HepG2 (cell line): ENCODE measurements at regions of chr17 and their contacts with region 1.

Region 1: GRCh38 chr17:31524926-31525800 is 133.7 kb downstream of the RAB11FIP4 start:
- DNase-seq: peak; percentile 61
- ATAC-seq: peak; percentile 85
- H3K4me3 ChIP-seq: no peak overlapping the region
- H3K27ac ChIP-seq: no peak overlapping the region
- H3K4me1 ChIP-seq: peaks cover 13% of the 10 kb centered on the region
- H3K27me3 ChIP-seq: no peaks in the 10 kb centered on the region
- CTCF ChIP-seq: peak; percentile 93
- EP300 ChIP-seq: no peak
- POLR2A ChIP-seq: no peak
- RAD21 ChIP-seq: peak; percentile 97

Region 2: DNA sequence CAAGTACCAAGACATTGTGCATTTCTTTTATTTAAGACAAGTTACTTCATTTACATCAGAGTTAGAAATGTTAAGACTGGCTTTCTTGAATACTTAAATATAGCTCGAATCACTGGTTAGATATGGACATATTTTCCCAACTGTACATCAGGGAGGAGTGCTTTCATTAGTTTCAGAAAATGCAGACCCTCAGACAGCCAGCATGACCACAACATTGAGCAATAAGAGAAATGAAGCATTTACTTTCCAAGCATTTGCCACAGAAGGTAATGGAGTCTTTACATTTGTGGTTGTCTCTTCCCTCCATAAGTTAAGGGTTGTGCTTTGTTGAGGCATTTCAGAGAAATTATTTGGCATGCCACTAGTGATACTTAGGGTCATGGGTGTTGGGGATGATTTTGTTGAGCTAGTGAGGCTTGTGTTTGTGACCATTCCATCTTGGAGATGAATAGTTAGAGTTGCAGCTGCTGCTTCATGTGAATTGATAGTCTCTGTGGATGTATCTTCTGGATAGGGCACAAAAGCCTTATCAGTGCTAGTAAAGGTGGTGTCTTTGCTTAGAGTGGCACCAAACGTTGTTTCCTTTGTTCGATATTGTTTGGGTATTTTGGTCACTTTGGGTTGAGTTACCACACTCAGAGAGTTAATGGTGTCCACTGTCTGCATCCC is 230.2 kb before region 1 on chr17:
- CTCF ChIA-PET with region 1: no interaction called
- POLR2A ChIA-PET with region 1: no interaction called
- in situ Hi-C with region 1: no loop called
- intact Hi-C with region 1: no loop called
- DNase-seq: no peak
- ATAC-seq: no peak
- H3K4me3 ChIP-seq: no peak overlapping the region
- H3K27ac ChIP-seq: no peak overlapping the region
- H3K4me1 ChIP-seq: no peaks in the 10 kb centered on the region
- H3K27me3 ChIP-seq: no peaks in the 10 kb centered on the region
- CTCF ChIP-seq: no peak
- EP300 ChIP-seq: no peak
- POLR2A ChIP-seq: no peak
- RAD21 ChIP-seq: no peak

Region 3: DNA sequence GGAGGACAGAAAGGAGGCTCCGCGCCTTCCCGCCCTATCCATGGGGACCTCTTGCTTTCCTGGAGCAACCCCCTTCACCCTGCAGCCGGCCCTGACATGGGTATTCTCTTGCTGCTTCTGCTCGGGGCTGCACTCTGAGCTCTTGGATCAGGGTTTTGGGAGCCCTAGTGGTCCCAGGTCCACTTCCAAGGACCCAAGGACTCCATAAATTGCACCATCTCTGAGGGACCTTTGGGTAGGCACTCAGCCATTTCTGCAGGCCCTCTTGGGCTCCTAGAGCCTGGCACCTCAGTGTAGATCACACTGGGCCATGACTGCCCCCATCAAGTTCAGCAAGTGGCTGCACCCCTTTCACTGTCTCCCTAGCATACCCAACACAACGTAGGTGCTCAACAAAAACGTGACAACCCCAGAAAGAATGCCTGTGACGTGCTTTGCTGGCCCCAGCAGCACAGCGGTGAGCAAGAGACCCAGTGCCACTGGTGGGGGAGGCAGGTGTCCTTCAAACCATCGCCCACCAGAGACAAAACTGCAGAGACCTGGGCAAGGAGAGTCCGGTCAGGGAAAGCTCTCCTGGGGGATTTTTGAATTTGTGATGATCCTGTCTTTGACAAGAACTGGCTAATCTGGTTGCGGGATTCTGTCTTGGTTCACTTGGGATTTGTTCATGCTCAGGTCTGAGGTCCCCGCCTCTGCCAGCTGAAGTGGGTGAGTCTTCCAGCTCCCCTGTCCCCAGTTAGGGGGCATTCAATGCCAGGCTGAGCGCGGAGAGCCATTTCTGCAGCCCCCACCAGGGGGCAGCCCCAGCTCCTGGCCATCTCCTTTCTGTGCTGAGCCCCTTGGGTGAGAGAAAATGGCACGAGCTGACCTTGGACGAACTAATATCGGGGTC is 136.1 kb before region 1 on chr17:
- CTCF ChIA-PET with region 1: interaction called, 24 read pairs
- POLR2A ChIA-PET with region 1: no interaction called
- in situ Hi-C with region 1: no loop called
- intact Hi-C with region 1: loop called (anchors 2 kb)
- DNase-seq: no peak
- ATAC-seq: peak; percentile 71
- H3K4me3 ChIP-seq: no peak overlapping the region
- H3K27ac ChIP-seq: no peak overlapping the region
- H3K4me1 ChIP-seq: no peaks in the 10 kb centered on the region
- H3K27me3 ChIP-seq: peaks cover 8 to 37% of the 10 kb centered on the region in 2 experiments
- CTCF ChIP-seq: peak; percentile 72
- EP300 ChIP-seq: no peak
- POLR2A ChIP-seq: no peak
- RAD21 ChIP-seq: peak; percentile 83

Region 4: GRCh38 chr17:31558748-31559644 is 33.8 kb after region 1 on chr17:
- CTCF ChIA-PET with region 1: no interaction called
- POLR2A ChIA-PET with region 1: no interaction called
- in situ Hi-C with region 1: no loop called
- intact Hi-C with region 1: no loop called
- DNase-seq: peak; percentile 59
- ATAC-seq: peak; percentile 76
- H3K4me3 ChIP-seq: peak overlapping the region; percentile 66 to 73 (median 73)
- H3K27ac ChIP-seq: peak overlapping the region; percentile 58
- H3K4me1 ChIP-seq: peaks cover 44% of the 10 kb centered on the region
- H3K27me3 ChIP-seq: peaks cover 0 to 6% of the 10 kb centered on the region in 2 experiments; a peak in 3 of 5 replicates
- CTCF ChIP-seq: peak; percentile 71
- EP300 ChIP-seq: no peak
- POLR2A ChIP-seq: peak in 1 of 2 experiments; percentile 68; a peak in 2 of 4 replicates
- RAD21 ChIP-seq: peak; percentile 95